ENCODE measurements at regions of chr1 and their contacts with region 1.

Region 1: DNA sequence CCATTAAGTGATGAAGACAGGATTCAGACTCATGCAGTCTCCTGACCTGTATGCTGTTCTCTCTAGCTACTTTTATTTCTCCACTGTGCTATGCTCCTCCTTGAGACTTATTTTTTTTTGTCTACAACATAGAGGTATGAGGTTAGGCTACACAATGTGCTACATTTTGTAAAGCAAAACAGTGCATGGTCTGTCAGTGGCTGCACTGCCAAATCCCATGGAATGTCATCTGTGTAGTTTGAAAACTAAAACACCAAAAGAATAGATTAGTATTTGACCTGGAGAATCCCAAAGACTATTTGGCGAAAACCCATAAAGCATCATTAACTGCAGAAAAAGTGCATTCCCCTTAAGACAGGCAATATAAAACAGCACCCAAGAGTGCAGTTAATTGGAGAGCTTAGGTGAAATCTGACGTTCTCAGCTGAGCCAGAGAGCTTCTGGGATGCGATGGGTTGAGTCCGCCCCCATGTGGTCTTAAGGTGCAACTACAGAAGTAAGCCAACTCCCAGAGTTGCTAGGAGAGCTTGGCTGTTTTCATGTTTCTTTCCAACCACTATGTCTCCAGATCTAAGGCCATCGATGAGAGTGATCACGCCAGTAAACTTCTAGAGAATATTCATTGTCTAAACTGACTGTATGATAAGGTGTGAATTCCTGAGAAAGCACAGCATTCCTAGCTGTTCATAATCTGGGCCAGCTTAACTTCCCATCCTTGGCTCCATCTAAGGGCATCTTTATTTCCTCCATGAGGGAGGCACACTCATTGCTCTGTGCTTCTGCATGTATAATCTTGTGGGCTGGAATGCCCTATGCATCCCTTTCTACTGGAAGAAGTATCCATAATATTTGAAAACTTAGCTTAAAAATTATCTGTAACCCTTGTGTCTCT is 20.7 kb upstream of the CYP2J2 start:
- DNase-seq: peak; percentile 76
- ATAC-seq: peak; percentile 97
- H3K4me3 ChIP-seq: no peak overlapping the region
- H3K27ac ChIP-seq: no peak overlapping the region
- H3K4me1 ChIP-seq: no peaks in the 10 kb centered on the region
- H3K27me3 ChIP-seq: peaks cover 35% of the 10 kb centered on the region
- CTCF ChIP-seq: peak; percentile 95

Region 2: DNA sequence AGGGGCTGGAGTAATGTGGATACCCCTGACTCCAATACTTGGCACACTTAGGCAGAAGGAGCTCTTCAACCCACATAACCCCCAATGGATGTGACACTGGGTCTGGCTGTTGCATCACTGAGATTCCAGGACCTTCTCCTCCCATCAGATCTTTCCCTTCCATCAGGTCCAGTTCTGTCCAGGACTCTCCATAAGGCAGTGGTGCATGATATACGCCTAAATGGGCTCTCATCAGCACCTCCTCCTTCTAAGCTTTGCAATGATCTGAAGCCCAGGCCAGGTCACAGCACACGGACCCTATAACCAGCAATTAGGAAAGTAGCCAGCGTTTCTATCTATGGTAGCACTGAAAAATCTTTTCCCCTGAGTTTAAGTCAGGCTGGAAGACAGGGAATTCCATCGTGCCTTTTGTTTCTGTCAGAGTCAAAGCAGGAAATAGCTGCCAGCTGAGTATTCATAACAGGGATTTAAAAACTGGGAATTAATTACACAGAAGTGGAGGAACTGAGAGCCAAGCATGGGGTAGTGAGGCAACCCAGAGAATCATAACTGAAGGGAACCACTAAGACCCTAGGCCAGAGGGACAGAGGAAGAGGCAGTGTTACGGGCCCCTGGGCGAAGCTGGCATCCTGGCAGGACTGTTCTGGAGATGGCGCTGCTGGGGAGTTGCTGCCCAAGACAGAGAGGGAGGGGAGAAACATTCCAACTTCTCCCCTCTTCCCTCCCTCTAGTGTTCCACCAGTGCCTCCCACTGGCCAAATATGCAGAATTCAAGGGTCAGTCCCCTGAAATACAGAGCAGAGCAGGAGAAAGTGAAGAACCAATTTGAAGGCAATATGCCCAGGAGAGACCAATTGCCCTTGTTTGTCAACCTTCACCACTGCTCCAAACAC is 170.1 kb before region 1 on chr1:
- CTCF ChIA-PET with region 1: no interaction called
- POLR2A ChIA-PET with region 1: no interaction called
- intact Hi-C with region 1: loop called (anchors 10 kb)
- DNase-seq: no peak
- ATAC-seq: no peak
- H3K4me3 ChIP-seq: no peak overlapping the region
- H3K27ac ChIP-seq: no peak overlapping the region
- H3K4me1 ChIP-seq: no peaks in the 10 kb centered on the region
- H3K27me3 ChIP-seq: no peaks in the 10 kb centered on the region
- CTCF ChIP-seq: peak; percentile 33; the same call in 1 of the 2 replicates

Region 3: DNA sequence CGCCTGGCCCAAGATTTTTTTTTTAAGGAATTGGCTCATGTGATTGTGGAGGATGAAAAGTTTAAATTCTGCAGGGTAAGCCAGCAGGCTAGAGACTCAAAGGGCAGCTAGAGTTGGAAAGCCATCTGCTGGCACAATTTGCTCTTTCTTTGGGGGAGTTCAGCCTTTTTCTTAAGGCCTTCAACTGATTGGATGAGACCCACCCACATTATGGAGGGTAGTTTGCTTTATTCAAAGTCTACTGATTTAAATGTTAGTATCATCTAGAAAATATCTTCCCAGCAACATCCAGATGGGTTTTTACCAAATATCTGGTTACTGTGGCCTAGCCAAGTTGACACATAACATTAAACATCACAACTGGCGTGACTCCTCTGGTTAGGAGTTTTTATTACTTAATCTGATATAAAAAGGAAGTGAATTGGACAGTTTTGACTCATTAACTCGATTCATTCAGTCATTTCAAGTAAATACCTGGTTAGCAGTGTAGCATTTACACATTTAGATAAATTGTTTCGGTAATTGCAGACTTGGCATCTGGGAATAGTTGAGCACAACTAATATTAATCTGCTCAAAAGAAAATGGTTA is 120.1 kb before region 1 on chr1:
- CTCF ChIA-PET with region 1: no interaction called
- POLR2A ChIA-PET with region 1: no interaction called
- intact Hi-C with region 1: no loop called
- DNase-seq: peak; percentile 18
- ATAC-seq: peak; percentile 42
- H3K4me3 ChIP-seq: no peak overlapping the region
- H3K27ac ChIP-seq: no peak overlapping the region
- H3K4me1 ChIP-seq: no peaks in the 10 kb centered on the region
- H3K27me3 ChIP-seq: no peaks in the 10 kb centered on the region
- CTCF ChIP-seq: no peak

Region 4: GRCh38 chr1:59879574-59879973 is 67.7 kb before region 1 on chr1:
- CTCF ChIA-PET with region 1: interaction called, 8 read pairs
- POLR2A ChIA-PET with region 1: interaction called, 24 read pairs
- intact Hi-C with region 1: loop called (anchors 1 kb)
- DNase-seq: peak; percentile 69
- ATAC-seq: peak; percentile 85
- H3K4me3 ChIP-seq: no peak overlapping the region
- H3K27ac ChIP-seq: no peak overlapping the region
- H3K4me1 ChIP-seq: no peaks in the 10 kb centered on the region
- H3K27me3 ChIP-seq: 0 out of 2 replicates have a peak, but pooled peaks cover 4% of the 10 kb centered on the region
- CTCF ChIP-seq: peak; percentile 76

Region 5: GRCh38 chr1:59903141-59903754 is 44.0 kb before region 1 on chr1:
- CTCF ChIA-PET with region 1: interaction called, 7 read pairs
- POLR2A ChIA-PET with region 1: no interaction called
- intact Hi-C with region 1: loop called (anchors 1 kb)
- DNase-seq: peak; percentile 61
- ATAC-seq: peak; percentile 93
- H3K4me3 ChIP-seq: no peak overlapping the region; the same call in 1 of the 2 replicates
- H3K27ac ChIP-seq: no peak overlapping the region
- H3K4me1 ChIP-seq: no peaks in the 10 kb centered on the region
- H3K27me3 ChIP-seq: no peaks in the 10 kb centered on the region; the same call in 1 of the 2 replicates
- CTCF ChIP-seq: peak; percentile 77

Measured in PC-3 (cell line).